Ovary (tissue), 10 donors: ENCODE measurements at regions of chr1 and their contacts with region 1.

Region 1: GRCh38 chr1:226736908-226737818 is 1.9 kb downstream of the ITPKB start:
- DNase-seq: peak; percentile 27 to 54 (median 39)
- H3K4me3 ChIP-seq: peak overlapping the region; percentile 74
- H3K27ac ChIP-seq: peak overlapping the region; percentile 73 to 75
- H3K4me1 ChIP-seq: peaks cover 14% of the 10 kb centered on the region
- H3K27me3 ChIP-seq: no peaks in the 10 kb centered on the region
- CTCF ChIP-seq: no peak
- EP300 ChIP-seq: no peak
- POLR2A ChIP-seq: no peak

Region 2: GRCh38 chr1:226532553-226532952 is 204.6 kb before region 1 on chr1:
- intact Hi-C with region 1: no loop called
- DNase-seq: no peak
- H3K4me3 ChIP-seq: no peak overlapping the region
- H3K27ac ChIP-seq: no peak overlapping the region
- H3K4me1 ChIP-seq: no peaks in the 10 kb centered on the region
- H3K27me3 ChIP-seq: no peaks in the 10 kb centered on the region
- CTCF ChIP-seq: no peak
- EP300 ChIP-seq: no peak
- POLR2A ChIP-seq: no peak

Region 3: DNA sequence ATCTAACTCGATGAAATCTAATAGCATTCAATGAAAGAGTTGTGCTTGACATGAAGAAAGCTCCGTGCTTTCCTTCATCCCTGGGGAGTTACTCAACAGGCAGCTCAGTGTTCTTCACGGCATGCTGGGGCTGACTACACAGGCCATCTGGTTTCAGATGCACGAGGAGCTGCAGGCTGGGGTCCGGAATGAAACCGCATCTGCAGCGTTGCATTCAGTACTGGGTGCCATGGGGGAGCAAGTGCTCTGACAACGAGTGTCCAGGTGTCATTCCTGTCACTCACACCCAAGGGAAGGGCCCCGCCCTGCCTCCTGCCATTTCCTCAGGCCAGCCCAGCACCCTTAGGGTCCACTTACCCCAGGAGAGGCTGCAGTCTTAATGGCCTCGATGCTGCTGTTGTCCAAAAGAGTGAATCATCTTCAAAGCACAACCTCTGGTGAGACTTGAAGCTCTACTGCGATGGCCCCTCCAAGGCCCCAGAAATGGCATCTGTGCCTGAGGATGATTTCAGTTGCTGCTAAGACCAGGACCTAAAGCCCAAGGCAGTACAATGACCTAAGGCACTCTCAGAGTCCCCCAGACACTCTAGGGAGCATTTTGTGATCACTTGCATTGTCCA is 127.2 kb before region 1 on chr1:
- intact Hi-C with region 1: no loop called
- DNase-seq: peak in 2 of 5 donors; percentile 10 to 25
- H3K4me3 ChIP-seq: no peak overlapping the region
- H3K27ac ChIP-seq: no peak overlapping the region
- H3K4me1 ChIP-seq: peaks cover 3% of the 10 kb centered on the region
- H3K27me3 ChIP-seq: no peaks in the 10 kb centered on the region
- CTCF ChIP-seq: no peak
- EP300 ChIP-seq: no peak
- POLR2A ChIP-seq: no peak

Region 4: GRCh38 chr1:226642876-226643576 is 94.1 kb before region 1 on chr1:
- intact Hi-C with region 1: loop called in 2 of 4 experiments (anchors 5 to 10 kb)
- DNase-seq: peak in 3 of 5 donors; percentile 33 to 53 (median 39)
- H3K4me3 ChIP-seq: no peak overlapping the region
- H3K27ac ChIP-seq: no peak overlapping the region
- H3K4me1 ChIP-seq: peaks cover 12% of the 10 kb centered on the region
- H3K27me3 ChIP-seq: no peaks in the 10 kb centered on the region
- CTCF ChIP-seq: no peak
- EP300 ChIP-seq: no peak
- POLR2A ChIP-seq: no peak

Region 5: DNA sequence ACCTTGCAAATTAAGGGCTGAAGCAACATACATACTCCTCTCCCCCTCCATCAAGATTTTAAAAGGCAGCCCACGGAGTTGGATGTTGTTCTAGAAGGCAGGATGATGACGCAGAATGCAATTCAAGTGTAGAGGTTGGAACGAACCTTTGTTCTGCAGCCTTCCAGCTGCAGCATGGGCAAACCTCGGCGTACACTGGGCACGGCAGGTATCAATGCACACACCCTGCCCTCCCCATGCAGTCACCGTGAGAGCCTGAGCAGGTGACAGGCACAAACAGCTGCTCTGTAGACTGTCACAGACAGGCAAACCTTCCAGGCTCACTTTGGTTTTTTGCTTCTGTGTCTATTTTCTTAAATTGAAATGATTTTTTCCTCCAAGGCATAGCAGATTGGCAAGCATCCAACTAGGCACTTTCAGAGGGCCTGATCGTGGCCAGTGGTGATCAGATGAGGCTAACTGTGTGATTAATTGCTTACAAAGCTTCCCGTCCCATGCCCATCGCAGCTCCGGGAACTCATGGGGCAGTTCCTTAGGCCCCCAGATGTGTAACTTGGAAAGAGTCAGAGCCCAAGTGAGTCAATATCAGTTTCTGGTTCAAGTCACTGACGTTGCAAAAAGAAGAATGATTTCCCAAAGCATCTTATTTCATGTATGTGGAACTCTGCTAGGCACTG is 80.4 kb before region 1 on chr1:
- intact Hi-C with region 1: loop called in 1 of 4 experiments (anchors 5 kb)
- DNase-seq: no peak
- H3K4me3 ChIP-seq: no peak overlapping the region
- H3K27ac ChIP-seq: no peak overlapping the region
- H3K4me1 ChIP-seq: peaks cover 24% of the 10 kb centered on the region
- H3K27me3 ChIP-seq: no peaks in the 10 kb centered on the region
- CTCF ChIP-seq: no peak
- EP300 ChIP-seq: peak; percentile 55
- POLR2A ChIP-seq: no peak

Region 6: GRCh38 chr1:226674892-226675714 is 62.1 kb before region 1 on chr1:
- intact Hi-C with region 1: no loop called
- DNase-seq: peak in 2 of 5 donors; percentile 21 to 28
- H3K4me3 ChIP-seq: no peak overlapping the region
- H3K27ac ChIP-seq: peak overlapping the region in 1 of 2 donors; percentile 75
- H3K4me1 ChIP-seq: peaks cover 18% of the 10 kb centered on the region
- H3K27me3 ChIP-seq: no peaks in the 10 kb centered on the region
- CTCF ChIP-seq: no peak
- EP300 ChIP-seq: no peak
- POLR2A ChIP-seq: no peak

Region 7: DNA sequence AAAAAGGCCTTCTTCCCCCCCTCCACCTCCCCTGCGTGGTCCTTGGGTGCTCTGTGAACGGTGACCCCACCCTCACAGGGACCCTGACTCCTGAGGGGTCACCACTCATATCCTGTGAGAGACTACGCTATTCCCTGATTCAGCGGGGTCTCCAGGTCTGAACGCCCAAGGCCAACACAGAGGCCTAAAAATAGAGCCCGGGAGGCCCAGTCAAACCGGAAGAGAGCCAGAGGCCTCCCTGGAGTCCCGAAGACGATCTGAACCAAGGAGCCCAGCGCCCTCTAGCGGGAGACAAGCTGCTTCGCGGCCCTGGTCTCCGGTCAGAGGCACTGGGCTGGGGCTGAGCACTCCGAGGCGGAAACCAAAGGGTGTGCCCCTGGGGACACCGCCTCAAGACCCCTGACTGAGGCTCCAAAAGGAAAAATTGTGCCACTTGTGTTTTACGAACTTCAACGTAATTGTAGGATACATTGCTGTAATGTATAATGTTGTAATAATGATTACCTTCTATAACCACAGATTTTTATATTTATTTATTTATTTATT is 90.9 kb after region 1 on chr1:
- intact Hi-C with region 1: loop called in 1 of 4 experiments (anchors 5 kb)
- DNase-seq: peak; percentile 95 to 98 (median 97)
- H3K4me3 ChIP-seq: no peak overlapping the region
- H3K27ac ChIP-seq: peak overlapping the region; percentile 15 to 69
- H3K4me1 ChIP-seq: no peaks in the 10 kb centered on the region
- H3K27me3 ChIP-seq: no peaks in the 10 kb centered on the region
- CTCF ChIP-seq: peak; percentile 78 to 93 (median 88)
- EP300 ChIP-seq: no peak
- POLR2A ChIP-seq: no peak